SK-N-SH (cell line): ENCODE measurements at regions of chr5 and their contacts with region 1.

Region 1: GRCh38 chr5:151447174-151448037 is at the start of gene SLC36A1:
- DNase-seq: peak; percentile 93
- H3K4me3 ChIP-seq: peak within 1 kb of the TSS; percentile 79 to 94
- H3K27ac ChIP-seq: peak within 1 kb of the TSS; percentile 28 to 62; a peak in 2 of 4 replicates
- H3K4me1 ChIP-seq: peaks cover 0 to 19% of the 10 kb centered on the region in 2 experiments; a peak in 1 of 4 replicates
- H3K27me3 ChIP-seq: no peaks in the 10 kb centered on the region
- CTCF ChIP-seq: peak; percentile 93
- EP300 ChIP-seq: no peak; a peak in 1 of 4 replicates
- RAD21 ChIP-seq: peak; percentile 84
- polyA plus RNA-seq, gene SLC36A1: 4.1 and 6.3 TPM in 2 replicates

Region 2: GRCh38 chr5:151134238-151134637 is 313.2 kb before region 1 on chr5:
- CTCF ChIA-PET with region 1: no interaction called
- POLR2A ChIA-PET with region 1: no interaction called
- DNase-seq: no peak
- H3K4me3 ChIP-seq: no peak overlapping the region
- H3K27ac ChIP-seq: no peak overlapping the region
- H3K4me1 ChIP-seq: no peaks in the 10 kb centered on the region
- H3K27me3 ChIP-seq: no peaks in the 10 kb centered on the region
- CTCF ChIP-seq: no peak
- EP300 ChIP-seq: no peak
- RAD21 ChIP-seq: no peak

Region 3: GRCh38 chr5:151463137-151464029 is 16.0 kb after region 1 on chr5:
- CTCF ChIA-PET with region 1: interaction called, 60 read pairs
- POLR2A ChIA-PET with region 1: no interaction called
- DNase-seq: no peak
- H3K4me3 ChIP-seq: no peak overlapping the region
- H3K27ac ChIP-seq: no peak overlapping the region
- H3K4me1 ChIP-seq: no peaks in the 10 kb centered on the region
- H3K27me3 ChIP-seq: no peaks in the 10 kb centered on the region
- CTCF ChIP-seq: no peak
- EP300 ChIP-seq: no peak
- RAD21 ChIP-seq: no peak

Region 4: DNA sequence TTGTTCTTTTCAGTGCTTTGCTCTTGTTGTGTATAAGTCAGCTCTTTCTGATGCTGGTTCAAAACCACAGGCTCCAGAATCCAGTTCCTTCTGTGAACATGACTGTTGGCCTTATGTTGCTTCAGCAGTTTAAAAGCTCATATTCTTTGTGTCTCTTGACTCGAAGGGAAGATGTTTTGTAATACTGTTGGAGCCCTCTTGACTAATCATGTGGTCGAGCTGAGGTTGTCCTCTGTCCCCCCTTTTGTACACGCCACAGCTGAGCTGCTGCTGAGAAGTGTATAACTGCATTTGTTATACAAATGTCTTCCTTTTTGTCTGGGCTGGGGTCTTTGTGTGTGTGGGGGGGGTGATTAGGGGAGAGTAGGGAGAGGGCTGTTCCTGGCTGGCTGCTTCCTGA is 35.8 kb after region 1 on chr5:
- CTCF ChIA-PET with region 1: interaction called, 28 read pairs
- POLR2A ChIA-PET with region 1: no interaction called
- DNase-seq: no peak
- H3K4me3 ChIP-seq: no peak overlapping the region
- H3K27ac ChIP-seq: peak overlapping the region in 1 of 2 experiments; percentile 20; a peak in 1 of 4 replicates
- H3K4me1 ChIP-seq: peaks cover 13% of the 10 kb centered on the region in 2 experiments; a peak in 3 of 4 replicates
- H3K27me3 ChIP-seq: no peaks in the 10 kb centered on the region
- CTCF ChIP-seq: no peak
- EP300 ChIP-seq: no peak
- RAD21 ChIP-seq: no peak

Region 5: DNA sequence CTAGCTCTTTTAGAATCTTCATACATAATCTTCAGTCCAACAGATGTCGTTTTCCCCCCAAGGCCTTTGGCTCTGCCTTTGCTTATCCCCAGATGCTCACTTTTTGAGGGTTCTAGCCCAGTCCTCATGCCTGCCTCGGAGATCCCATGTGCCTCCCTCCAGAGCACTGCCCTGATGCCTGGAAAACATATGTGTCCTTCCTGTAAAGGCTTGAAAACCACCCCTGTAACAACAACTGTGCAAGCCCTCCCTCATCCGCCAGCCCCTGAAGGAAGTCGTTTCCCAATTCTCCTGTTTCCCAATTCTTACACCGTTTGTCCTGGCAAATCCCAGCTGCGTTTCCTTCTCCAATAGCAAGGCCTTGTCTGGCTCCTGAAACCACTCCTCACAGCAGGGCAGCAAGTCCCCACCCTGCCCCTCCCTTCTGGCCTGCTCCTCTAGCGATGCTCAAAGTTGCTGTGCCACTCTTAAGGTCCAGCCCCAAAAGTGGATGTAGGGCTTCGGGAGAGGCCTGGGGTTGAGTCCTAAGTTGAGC is 52.2 kb after region 1 on chr5:
- CTCF ChIA-PET with region 1: interaction called, 108 read pairs
- POLR2A ChIA-PET with region 1: interaction called, 4 read pairs
- DNase-seq: peak; percentile 27
- H3K4me3 ChIP-seq: no peak overlapping the region
- H3K27ac ChIP-seq: no peak overlapping the region
- H3K4me1 ChIP-seq: peaks cover 0 to 11% of the 10 kb centered on the region in 2 experiments; a peak in 2 of 4 replicates
- H3K27me3 ChIP-seq: no peaks in the 10 kb centered on the region
- CTCF ChIP-seq: no peak
- EP300 ChIP-seq: no peak
- RAD21 ChIP-seq: no peak

Region 6: DNA sequence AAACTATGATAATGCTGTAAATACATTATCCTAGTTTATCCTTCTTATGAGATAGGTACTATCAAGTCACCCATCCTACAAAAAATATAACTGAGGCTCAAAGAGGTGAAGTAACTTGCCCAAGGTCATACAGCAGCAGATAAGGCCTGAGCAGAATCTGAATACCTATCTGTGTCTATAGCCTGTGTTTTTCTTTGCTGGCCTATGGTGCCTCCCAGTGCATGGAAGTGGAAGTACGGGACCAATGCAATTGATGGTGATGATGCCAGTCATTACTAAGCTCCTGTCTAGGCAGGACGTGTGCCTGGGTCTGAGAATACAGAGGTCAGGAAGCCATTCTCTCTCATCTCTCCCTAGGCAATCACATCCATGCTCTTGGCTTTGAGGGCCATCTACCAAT is 75.9 kb after region 1 on chr5:
- CTCF ChIA-PET with region 1: interaction called, 32 read pairs
- POLR2A ChIA-PET with region 1: no interaction called
- DNase-seq: peak; percentile 72
- H3K4me3 ChIP-seq: no peak overlapping the region
- H3K27ac ChIP-seq: no peak overlapping the region
- H3K4me1 ChIP-seq: no peaks in the 10 kb centered on the region
- H3K27me3 ChIP-seq: peaks cover 10% of the 10 kb centered on the region; the same call in 1 of the 2 replicates
- CTCF ChIP-seq: peak; percentile 65
- EP300 ChIP-seq: no peak
- RAD21 ChIP-seq: peak; percentile 83

Region 7: GRCh38 chr5:151612689-151613427 is 165.5 kb after region 1 on chr5:
- CTCF ChIA-PET with region 1: no interaction called
- POLR2A ChIA-PET with region 1: no interaction called
- DNase-seq: no peak
- H3K4me3 ChIP-seq: no peak overlapping the region
- H3K27ac ChIP-seq: no peak overlapping the region
- H3K4me1 ChIP-seq: no peaks in the 10 kb centered on the region
- H3K27me3 ChIP-seq: no peaks in the 10 kb centered on the region
- CTCF ChIP-seq: no peak
- EP300 ChIP-seq: no peak
- RAD21 ChIP-seq: no peak